ENCODE measurements at regions of chr1 and their contacts with region 1.

Region 1: GRCh38 chr1:175023043-175023921 is at the start of gene MRPS14:
- DNase-seq: peak; percentile 90
- H3K4me3 ChIP-seq: peak within 1 kb of the TSS; percentile 93
- H3K27me3 ChIP-seq: no peaks in the 10 kb centered on the region
- CTCF ChIP-seq: no peak
- polyA plus RNA-seq, gene MRPS14: 22.4 and 33.3 TPM in 2 replicates

Region 2: DNA sequence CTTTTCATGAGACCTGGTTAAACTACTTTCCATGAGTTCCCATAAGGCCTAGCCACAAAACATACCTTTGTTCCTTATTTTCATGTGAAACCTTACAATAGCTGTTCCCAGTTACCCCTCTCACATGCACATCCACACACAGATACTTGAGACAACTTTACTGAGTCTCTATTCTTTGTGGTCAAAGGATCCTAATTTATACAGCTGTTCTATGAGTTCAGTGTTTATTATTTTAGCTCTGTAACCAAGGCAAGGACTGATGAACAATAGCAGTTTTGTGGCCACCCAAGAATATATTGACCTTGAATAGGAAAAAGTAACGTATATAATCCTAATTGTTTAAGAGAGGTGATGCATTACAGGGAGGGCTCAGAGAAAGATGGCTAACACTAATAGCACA is 184.1 kb before region 1 on chr1:
- CTCF ChIA-PET with region 1: no interaction called
- POLR2A ChIA-PET with region 1: no interaction called
- DNase-seq: no peak
- H3K4me3 ChIP-seq: no peak overlapping the region
- H3K27me3 ChIP-seq: no peaks in the 10 kb centered on the region
- CTCF ChIP-seq: no peak

Region 3: DNA sequence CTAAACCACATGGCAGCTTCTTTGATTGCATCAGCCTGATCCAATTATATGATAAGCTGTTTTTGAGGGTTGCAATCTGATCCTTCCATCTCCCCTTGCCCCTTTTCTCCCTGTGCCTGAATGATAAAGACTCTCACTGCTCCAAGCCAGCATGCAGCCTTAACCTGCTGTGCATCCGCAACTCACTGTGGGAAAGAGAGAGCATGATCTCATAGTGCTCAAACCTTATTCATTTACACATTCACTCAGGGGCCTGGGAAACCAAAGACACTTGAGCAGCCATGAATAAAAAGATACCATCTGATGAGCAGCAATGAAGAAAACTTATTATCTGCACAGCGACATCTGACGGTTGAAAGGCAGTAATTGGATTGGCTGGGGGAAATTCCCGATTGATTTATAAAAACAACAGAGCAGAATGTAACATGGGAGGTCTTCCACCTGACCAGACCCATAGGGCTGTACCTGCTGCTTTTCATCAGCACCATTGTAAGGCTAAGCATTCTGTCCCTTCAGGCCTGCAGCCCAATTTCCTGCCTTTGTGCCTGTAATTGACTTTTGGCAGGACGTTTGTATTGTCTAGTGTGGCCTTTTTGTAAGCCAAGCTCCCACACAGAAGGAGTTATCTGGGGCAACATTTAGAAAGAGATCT is 106.8 kb after region 1 on chr1:
- CTCF ChIA-PET with region 1: interaction called, 6 read pairs
- POLR2A ChIA-PET with region 1: interaction called, 17 read pairs
- DNase-seq: no peak
- H3K4me3 ChIP-seq: no peak overlapping the region
- H3K27me3 ChIP-seq: no peaks in the 10 kb centered on the region
- CTCF ChIP-seq: no peak

Measured in BJ (cell line).